GM12878 (cell line): ENCODE measurements at regions of chr5 and their contacts with region 1.

Region 1: GRCh38 chr5:151213800-151214613 is 9.9 kb downstream of the CCDC69 start:
- DNase-seq: peak; percentile 93
- ATAC-seq: peak; percentile 83
- H3K4me3 ChIP-seq: peak overlapping the region; percentile 74
- H3K27ac ChIP-seq: peak overlapping the region; percentile 99
- H3K4me1 ChIP-seq: peaks cover 57% of the 10 kb centered on the region
- H3K27me3 ChIP-seq: no peaks in the 10 kb centered on the region
- CTCF ChIP-seq: no peak
- EP300 ChIP-seq: peak in 1 of 2 experiments; percentile 64; a peak in 1 of 4 replicates
- POLR2A ChIP-seq: peak; percentile 93
- RAD21 ChIP-seq: no peak

Region 2: DNA sequence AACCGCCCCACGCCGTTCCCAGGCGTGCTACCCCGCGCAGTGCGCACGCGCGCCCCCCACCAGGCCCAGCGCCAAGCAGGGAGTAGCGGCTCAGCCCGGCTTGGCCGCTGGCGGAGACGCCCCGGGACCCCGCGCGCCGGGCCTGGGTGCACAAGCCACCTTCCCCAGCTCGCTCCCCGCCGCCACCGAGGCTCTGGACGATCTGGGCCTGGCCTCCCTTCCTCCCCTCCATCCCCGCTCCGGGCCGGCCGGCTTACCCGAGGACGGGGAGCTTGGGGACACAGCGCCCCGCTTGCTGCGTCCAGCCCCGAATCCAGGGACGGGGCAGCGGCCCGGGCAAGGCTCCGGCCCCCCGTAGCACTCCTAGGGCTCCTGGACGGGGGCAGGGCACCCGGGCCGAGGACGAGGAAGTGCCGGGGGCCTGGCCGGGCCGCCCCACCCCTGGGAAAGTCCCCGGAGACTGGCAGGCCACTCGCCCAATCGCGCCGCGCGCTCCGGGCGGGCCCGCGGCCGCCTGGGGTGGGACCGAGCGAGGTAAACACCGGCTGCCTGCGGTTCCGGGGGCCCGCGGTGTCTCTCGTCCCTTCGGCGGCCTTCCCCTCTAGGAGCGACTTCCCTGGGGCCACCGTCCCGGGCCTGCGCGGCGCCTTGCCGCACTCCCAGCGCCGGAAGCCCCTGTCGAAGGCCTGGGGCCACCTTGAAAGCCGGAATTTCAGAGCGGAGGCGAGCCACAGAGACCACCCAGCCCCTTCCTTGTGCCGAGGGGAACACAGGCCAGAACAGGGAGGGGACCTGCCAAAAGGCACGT is 133.2 kb before region 1 on chr5 and contains the start of gene TNIP1:
- CTCF ChIA-PET with region 1: no interaction called
- POLR2A ChIA-PET with region 1: interaction called, 13 read pairs
- RAD21 ChIA-PET with region 1: interaction called, 21 read pairs
- SMC1A ChIA-PET with region 1: interaction called, 3 read pairs
- in situ Hi-C with region 1: no loop called
- intact Hi-C with region 1: loop called (anchors 5 kb)
- DNase-seq: no peak
- ATAC-seq: peak; percentile 78
- H3K4me3 ChIP-seq: peak within 1 kb of the TSS; percentile 89
- H3K27ac ChIP-seq: peak within 1 kb of the TSS; percentile 90
- H3K4me1 ChIP-seq: peaks cover 44% of the 10 kb centered on the region
- H3K27me3 ChIP-seq: no peaks in the 10 kb centered on the region
- CTCF ChIP-seq: no peak
- EP300 ChIP-seq: no peak; a peak in 1 of 4 replicates
- POLR2A ChIP-seq: peak; percentile 89
- RAD21 ChIP-seq: no peak
- polyA plus RNA-seq, gene TNIP1: 4.4 to 13.7 TPM

Region 3: GRCh38 chr5:151150471-151151262 is 63.3 kb before region 1 on chr5:
- CTCF ChIA-PET with region 1: no interaction called
- POLR2A ChIA-PET with region 1: interaction called, 21 read pairs
- RAD21 ChIA-PET with region 1: interaction called, 22 read pairs
- SMC1A ChIA-PET with region 1: interaction called, 3 read pairs
- in situ Hi-C with region 1: no loop called
- intact Hi-C with region 1: no loop called
- DNase-seq: peak; percentile 50
- ATAC-seq: peak; percentile 51
- H3K4me3 ChIP-seq: peak overlapping the region; percentile 57
- H3K27ac ChIP-seq: peak overlapping the region; percentile 89
- H3K4me1 ChIP-seq: peaks cover 62% of the 10 kb centered on the region
- H3K27me3 ChIP-seq: no peaks in the 10 kb centered on the region
- CTCF ChIP-seq: no peak
- EP300 ChIP-seq: no peak
- POLR2A ChIP-seq: peak; percentile 70
- RAD21 ChIP-seq: no peak

Region 4: GRCh38 chr5:151191659-151192058 is 22.3 kb before region 1 on chr5:
- CTCF ChIA-PET with region 1: interaction called, 5 read pairs
- POLR2A ChIA-PET with region 1: interaction called, 20 read pairs
- RAD21 ChIA-PET with region 1: interaction called, 24 read pairs
- SMC1A ChIA-PET with region 1: interaction called, 18 read pairs
- in situ Hi-C with region 1: no loop called
- intact Hi-C with region 1: loop called (anchors 2 kb)
- DNase-seq: no peak
- ATAC-seq: no peak
- H3K4me3 ChIP-seq: no peak overlapping the region
- H3K27ac ChIP-seq: no peak overlapping the region
- H3K4me1 ChIP-seq: peaks cover 11% of the 10 kb centered on the region
- H3K27me3 ChIP-seq: no peaks in the 10 kb centered on the region
- CTCF ChIP-seq: no peak
- EP300 ChIP-seq: no peak
- POLR2A ChIP-seq: no peak
- RAD21 ChIP-seq: no peak

Region 5: GRCh38 chr5:151202381-151203139 is 11.4 kb before region 1 on chr5:
- CTCF ChIA-PET with region 1: interaction called, 19 read pairs
- POLR2A ChIA-PET with region 1: interaction called, 20 read pairs
- RAD21 ChIA-PET with region 1: interaction called, 24 read pairs
- SMC1A ChIA-PET with region 1: interaction called, 18 read pairs
- in situ Hi-C with region 1: no loop called
- intact Hi-C with region 1: loop called (anchors 2 kb)
- DNase-seq: no peak
- ATAC-seq: peak; percentile 71
- H3K4me3 ChIP-seq: no peak overlapping the region
- H3K27ac ChIP-seq: no peak overlapping the region
- H3K4me1 ChIP-seq: peaks cover 5% of the 10 kb centered on the region
- H3K27me3 ChIP-seq: no peaks in the 10 kb centered on the region
- CTCF ChIP-seq: no peak
- EP300 ChIP-seq: no peak
- POLR2A ChIP-seq: no peak
- RAD21 ChIP-seq: no peak